ENCODE measurements at regions of chr21 and their contacts with region 1.

Region 1: GRCh38 chr21:36419996-36420395 is 34.8 kb downstream of the CHAF1B start:
- DNase-seq: no peak
- ATAC-seq: peak; percentile 93
- H3K4me3 ChIP-seq: no peak overlapping the region
- H3K27ac ChIP-seq: no peak overlapping the region
- H3K4me1 ChIP-seq: no peaks in the 10 kb centered on the region
- H3K27me3 ChIP-seq: no peaks in the 10 kb centered on the region
- CTCF ChIP-seq: peak; percentile 76 to 90 (median 78)
- EP300 ChIP-seq: no peak
- POLR2A ChIP-seq: no peak
- RAD21 ChIP-seq: peak; percentile 78

Region 2: DNA sequence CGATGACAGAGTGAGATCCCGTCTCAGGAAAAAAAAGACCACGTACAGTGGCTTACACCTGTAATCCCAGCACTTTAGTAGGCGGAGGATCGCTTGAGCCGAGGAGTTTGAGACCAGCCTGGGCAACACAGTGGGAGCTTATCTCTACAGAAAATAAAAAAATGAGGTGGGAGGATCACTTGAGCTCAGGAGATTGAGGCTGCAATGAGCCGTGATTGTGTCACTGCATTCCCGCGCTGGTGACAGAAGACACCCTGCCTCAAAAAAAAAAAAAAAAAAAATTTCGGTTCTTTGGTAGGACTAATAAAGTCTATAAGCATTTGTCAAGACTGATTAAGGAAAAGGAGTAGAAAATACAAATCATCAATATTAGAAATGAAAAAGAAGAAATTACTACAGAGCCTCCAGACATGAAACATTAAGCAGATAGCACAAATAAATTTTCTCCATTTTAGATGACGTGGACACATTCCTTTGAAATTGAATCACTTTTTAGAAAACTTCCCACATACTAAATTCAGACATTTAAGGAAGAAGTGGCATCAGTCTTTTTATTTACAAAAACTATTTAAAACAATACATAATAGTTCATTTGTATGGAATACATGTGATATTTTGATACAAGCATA is 69.6 kb before region 1 on chr21:
- CTCF ChIA-PET with region 1: no interaction called
- POLR2A ChIA-PET with region 1: no interaction called
- RAD21 ChIA-PET with region 1: no interaction called
- SMC1A ChIA-PET with region 1: no interaction called
- in situ Hi-C with region 1: no loop called
- intact Hi-C with region 1: no loop called
- DNase-seq: no peak
- ATAC-seq: no peak
- H3K4me3 ChIP-seq: no peak overlapping the region
- H3K27ac ChIP-seq: no peak overlapping the region
- H3K4me1 ChIP-seq: no peaks in the 10 kb centered on the region
- H3K27me3 ChIP-seq: no peaks in the 10 kb centered on the region
- CTCF ChIP-seq: no peak
- EP300 ChIP-seq: no peak
- POLR2A ChIP-seq: no peak
- RAD21 ChIP-seq: no peak

Region 3: GRCh38 chr21:36396971-36397370 is 23.0 kb before region 1 on chr21:
- CTCF ChIA-PET with region 1: no interaction called
- POLR2A ChIA-PET with region 1: no interaction called
- RAD21 ChIA-PET with region 1: no interaction called
- SMC1A ChIA-PET with region 1: no interaction called
- in situ Hi-C with region 1: no loop called
- intact Hi-C with region 1: no loop called
- DNase-seq: no peak
- ATAC-seq: no peak
- H3K4me3 ChIP-seq: no peak overlapping the region
- H3K27ac ChIP-seq: no peak overlapping the region
- H3K4me1 ChIP-seq: no peaks in the 10 kb centered on the region
- H3K27me3 ChIP-seq: no peaks in the 10 kb centered on the region
- CTCF ChIP-seq: no peak
- EP300 ChIP-seq: no peak
- POLR2A ChIP-seq: no peak
- RAD21 ChIP-seq: no peak

Region 4: GRCh38 chr21:36471254-36471723 is 51.3 kb after region 1 on chr21:
- CTCF ChIA-PET with region 1: interaction called, 3 read pairs
- POLR2A ChIA-PET with region 1: no interaction called
- RAD21 ChIA-PET with region 1: interaction called, 3 read pairs
- SMC1A ChIA-PET with region 1: interaction called, 4 read pairs
- in situ Hi-C with region 1: no loop called
- intact Hi-C with region 1: loop called (anchors 5 kb)
- DNase-seq: peak; percentile 50
- ATAC-seq: peak; percentile 97
- H3K4me3 ChIP-seq: no peak overlapping the region
- H3K27ac ChIP-seq: peak overlapping the region; percentile 54; the same call in 1 of the 2 replicates
- H3K4me1 ChIP-seq: peaks cover 11% of the 10 kb centered on the region
- H3K27me3 ChIP-seq: no peaks in the 10 kb centered on the region
- CTCF ChIP-seq: peak in 1 of 3 experiments; percentile 10; a peak in 1 of 6 replicates
- EP300 ChIP-seq: no peak
- POLR2A ChIP-seq: no peak
- RAD21 ChIP-seq: peak; percentile 23; the same call in 1 of the 2 replicates

Region 5: DNA sequence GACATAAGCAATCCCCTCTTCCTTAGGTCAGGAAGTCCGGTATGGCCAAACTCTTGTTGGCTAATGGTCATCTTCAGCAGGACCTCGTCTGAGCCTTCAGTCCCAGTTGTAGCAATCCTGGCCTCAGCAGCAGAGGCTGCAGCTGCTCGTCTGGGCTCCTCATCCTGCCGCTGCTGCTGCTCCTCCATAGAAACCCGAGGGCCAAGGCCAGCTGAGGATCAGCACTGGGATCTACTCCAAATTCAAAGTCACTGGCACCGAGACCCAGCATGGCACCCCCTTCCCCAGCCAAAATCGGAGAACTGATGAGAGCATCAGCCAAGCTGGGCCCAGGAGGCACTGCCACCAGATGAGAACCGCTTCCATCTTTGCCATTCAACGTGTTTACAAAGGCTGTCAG is 66.2 kb after region 1 on chr21:
- CTCF ChIA-PET with region 1: no interaction called
- POLR2A ChIA-PET with region 1: no interaction called
- RAD21 ChIA-PET with region 1: no interaction called
- SMC1A ChIA-PET with region 1: no interaction called
- in situ Hi-C with region 1: no loop called
- intact Hi-C with region 1: no loop called
- DNase-seq: no peak
- ATAC-seq: no peak
- H3K4me3 ChIP-seq: no peak overlapping the region
- H3K27ac ChIP-seq: no peak overlapping the region
- H3K4me1 ChIP-seq: no peaks in the 10 kb centered on the region
- H3K27me3 ChIP-seq: no peaks in the 10 kb centered on the region
- CTCF ChIP-seq: no peak
- EP300 ChIP-seq: no peak
- POLR2A ChIP-seq: no peak
- RAD21 ChIP-seq: no peak

Region 6: DNA sequence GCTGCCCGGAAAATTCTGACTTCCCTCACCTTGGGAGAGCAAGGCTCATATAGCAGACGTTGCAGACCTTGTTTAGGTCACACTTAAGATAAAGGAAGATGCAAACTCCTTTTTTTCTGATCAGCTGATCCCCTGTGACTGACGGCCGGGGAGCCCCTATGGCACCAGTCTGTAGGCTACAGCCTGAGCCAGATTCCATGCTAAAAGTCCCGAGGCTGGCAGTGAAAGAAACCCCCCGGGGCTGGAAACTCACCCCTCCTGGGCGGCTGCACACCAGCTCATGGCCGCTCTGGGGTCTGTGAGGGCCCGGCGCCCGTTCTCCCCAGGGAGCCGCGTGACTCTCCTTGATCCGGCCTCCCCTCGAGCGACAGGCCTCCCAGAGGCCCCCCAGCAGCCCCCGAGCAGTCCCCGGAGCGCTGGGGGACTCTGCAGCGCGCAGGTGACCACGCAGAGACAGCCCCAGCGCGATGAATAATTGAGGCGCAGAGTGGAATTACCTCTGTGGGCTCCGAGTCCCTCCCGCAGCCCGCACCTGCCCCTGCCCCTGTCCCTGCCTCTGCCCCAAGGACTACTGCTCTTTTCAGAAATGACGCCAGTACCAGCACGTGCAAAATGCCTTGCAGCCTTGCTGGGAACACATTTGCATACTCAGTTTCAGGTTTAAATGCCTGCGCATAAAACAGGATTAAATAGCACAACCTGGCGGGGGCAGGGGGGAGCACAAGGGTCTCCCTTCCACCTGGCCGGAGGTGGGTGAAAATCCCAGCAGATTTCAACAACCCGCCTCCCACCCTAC is 122.5 kb after region 1 on chr21:
- CTCF ChIA-PET with region 1: interaction called, 5 read pairs
- POLR2A ChIA-PET with region 1: no interaction called
- RAD21 ChIA-PET with region 1: no interaction called
- SMC1A ChIA-PET with region 1: interaction called, 4 read pairs
- in situ Hi-C with region 1: no loop called
- intact Hi-C with region 1: loop called (anchors 2 kb)
- DNase-seq: peak; percentile 70
- ATAC-seq: peak; percentile 73
- H3K4me3 ChIP-seq: peak overlapping the region; percentile 72
- H3K27ac ChIP-seq: peak overlapping the region; percentile 59
- H3K4me1 ChIP-seq: peaks cover 12% of the 10 kb centered on the region
- H3K27me3 ChIP-seq: no peaks in the 10 kb centered on the region
- CTCF ChIP-seq: peak; percentile 70 to 79 (median 73)
- EP300 ChIP-seq: no peak; a peak in 2 of 4 replicates
- POLR2A ChIP-seq: peak; percentile 81
- RAD21 ChIP-seq: peak; percentile 87

Region 7: GRCh38 chr21:36589355-36589971 is 169.5 kb after region 1 on chr21:
- CTCF ChIA-PET with region 1: interaction called, 7 read pairs
- POLR2A ChIA-PET with region 1: no interaction called
- RAD21 ChIA-PET with region 1: interaction called, 3 read pairs
- SMC1A ChIA-PET with region 1: interaction called, 6 read pairs
- in situ Hi-C with region 1: no loop called
- intact Hi-C with region 1: loop called (anchors 1 kb)
- DNase-seq: peak; percentile 16
- ATAC-seq: peak; percentile 99
- H3K4me3 ChIP-seq: no peak overlapping the region
- H3K27ac ChIP-seq: no peak overlapping the region
- H3K4me1 ChIP-seq: no peaks in the 10 kb centered on the region; the same call in 1 of the 2 replicates
- H3K27me3 ChIP-seq: no peaks in the 10 kb centered on the region
- CTCF ChIP-seq: peak; percentile 66 to 69 (median 67)
- EP300 ChIP-seq: no peak
- POLR2A ChIP-seq: no peak
- RAD21 ChIP-seq: peak; percentile 77

Region 8: DNA sequence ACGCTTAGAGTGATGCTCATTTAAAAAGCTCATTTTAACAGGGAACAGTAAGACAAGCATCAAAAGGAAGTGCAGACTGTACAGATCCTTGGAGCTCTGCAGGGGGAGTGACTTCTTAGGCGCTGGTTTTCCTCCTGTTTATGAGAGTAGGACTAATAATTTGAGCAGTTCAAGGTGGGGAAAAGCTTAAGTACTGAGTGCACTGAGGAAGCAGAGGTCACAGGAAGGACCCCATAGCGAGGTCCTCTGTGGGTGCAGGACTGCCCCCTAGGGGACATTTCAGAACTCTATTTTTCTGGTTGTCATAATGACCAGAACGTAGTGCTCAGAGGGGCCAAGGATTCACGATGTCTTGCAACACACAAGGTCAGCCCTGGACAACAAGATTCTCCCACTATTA is 434.4 kb after region 1 on chr21:
- CTCF ChIA-PET with region 1: interaction called, 5 read pairs
- POLR2A ChIA-PET with region 1: no interaction called
- RAD21 ChIA-PET with region 1: no interaction called
- SMC1A ChIA-PET with region 1: interaction called, 4 read pairs
- in situ Hi-C with region 1: no loop called
- intact Hi-C with region 1: loop called (anchors 1 kb)
- DNase-seq: no peak
- ATAC-seq: peak; percentile 83
- H3K4me3 ChIP-seq: no peak overlapping the region
- H3K27ac ChIP-seq: no peak overlapping the region
- H3K4me1 ChIP-seq: no peaks in the 10 kb centered on the region
- H3K27me3 ChIP-seq: no peaks in the 10 kb centered on the region
- CTCF ChIP-seq: peak; percentile 51 to 61 (median 53)
- EP300 ChIP-seq: no peak
- POLR2A ChIP-seq: no peak
- RAD21 ChIP-seq: peak; percentile 65

Region 9: DNA sequence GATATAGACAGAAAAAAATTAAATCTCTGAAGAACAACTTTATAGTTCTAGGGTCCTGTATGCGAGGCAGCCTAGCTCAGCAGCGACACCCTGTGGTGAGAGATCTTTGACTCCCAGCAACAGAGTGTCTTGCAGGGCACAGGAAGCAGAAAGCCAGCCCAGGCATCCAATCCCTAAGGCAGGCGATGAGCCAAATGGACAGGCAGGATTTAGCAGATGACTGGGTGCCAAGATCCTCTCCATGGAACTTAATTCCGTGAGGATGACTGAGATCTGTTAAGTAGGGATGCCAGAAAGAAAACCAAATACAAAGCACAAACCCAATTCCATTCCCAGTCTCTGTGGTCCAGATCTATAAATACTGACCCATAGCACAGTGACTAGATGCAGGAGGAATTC is 507.7 kb after region 1 on chr21:
- CTCF ChIA-PET with region 1: interaction called, 9 read pairs
- POLR2A ChIA-PET with region 1: no interaction called
- RAD21 ChIA-PET with region 1: no interaction called
- SMC1A ChIA-PET with region 1: interaction called, 3 read pairs
- in situ Hi-C with region 1: loop called (anchors 5 kb)
- intact Hi-C with region 1: loop called (anchors 1 kb)
- DNase-seq: peak; percentile 12
- ATAC-seq: peak; percentile 98
- H3K4me3 ChIP-seq: no peak overlapping the region
- H3K27ac ChIP-seq: no peak overlapping the region
- H3K4me1 ChIP-seq: no peaks in the 10 kb centered on the region
- H3K27me3 ChIP-seq: no peaks in the 10 kb centered on the region
- CTCF ChIP-seq: peak; percentile 86 to 92 (median 89)
- EP300 ChIP-seq: no peak
- POLR2A ChIP-seq: no peak
- RAD21 ChIP-seq: peak; percentile 94